MCF 10A (cell line): ENCODE measurements at regions of chr11 and their contacts with region 1.

Region 1: DNA sequence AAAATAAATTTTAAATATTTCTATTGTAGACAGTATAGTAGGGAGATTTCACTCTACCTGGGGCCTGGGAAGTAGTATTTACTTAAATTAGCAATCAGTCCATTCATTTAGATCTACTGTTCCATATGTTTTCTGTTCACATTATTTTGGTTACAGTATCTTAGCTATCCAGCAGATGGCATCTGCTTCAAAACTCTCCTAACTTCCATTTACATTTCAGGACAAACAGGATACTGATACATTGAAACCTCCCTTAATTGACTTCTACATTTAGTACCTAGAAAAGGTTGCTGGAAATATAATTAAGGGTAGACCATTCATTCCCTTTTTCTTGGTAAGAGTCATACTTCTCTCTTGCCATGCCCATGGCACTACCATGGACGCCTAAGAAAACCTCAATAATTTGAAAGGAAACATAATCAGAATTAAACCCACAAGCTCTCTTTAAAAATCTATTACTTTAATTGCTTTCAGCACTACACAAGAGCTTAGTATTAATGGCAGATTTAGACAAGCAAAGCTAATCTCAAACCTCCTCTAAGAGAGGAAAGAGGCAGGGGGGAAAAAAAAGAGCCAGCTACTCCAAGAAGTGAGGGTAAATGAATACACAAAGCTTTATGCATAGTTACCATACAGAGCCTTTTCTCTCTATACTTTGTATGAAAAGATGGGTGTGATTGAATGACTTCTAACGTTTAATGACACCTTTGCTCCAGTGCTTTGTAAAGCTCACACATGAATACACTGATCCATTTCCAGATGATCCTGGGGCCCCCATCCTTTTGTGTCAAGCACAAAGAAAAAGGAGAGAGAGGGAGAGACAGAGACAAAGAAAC is 131.2 kb upstream of the MTMR2 start:
- DNase-seq: peak; percentile 49
- H3K4me3 Mint-ChIP-seq: no peak overlapping the region
- H3K27ac Mint-ChIP-seq: peak overlapping the region; percentile 61
- H3K4me1 Mint-ChIP-seq: peaks cover 13% of the 10 kb centered on the region
- H3K27me3 Mint-ChIP-seq: no peaks in the 10 kb centered on the region
- CTCF ChIP-seq: peak; percentile 47

Region 2: DNA sequence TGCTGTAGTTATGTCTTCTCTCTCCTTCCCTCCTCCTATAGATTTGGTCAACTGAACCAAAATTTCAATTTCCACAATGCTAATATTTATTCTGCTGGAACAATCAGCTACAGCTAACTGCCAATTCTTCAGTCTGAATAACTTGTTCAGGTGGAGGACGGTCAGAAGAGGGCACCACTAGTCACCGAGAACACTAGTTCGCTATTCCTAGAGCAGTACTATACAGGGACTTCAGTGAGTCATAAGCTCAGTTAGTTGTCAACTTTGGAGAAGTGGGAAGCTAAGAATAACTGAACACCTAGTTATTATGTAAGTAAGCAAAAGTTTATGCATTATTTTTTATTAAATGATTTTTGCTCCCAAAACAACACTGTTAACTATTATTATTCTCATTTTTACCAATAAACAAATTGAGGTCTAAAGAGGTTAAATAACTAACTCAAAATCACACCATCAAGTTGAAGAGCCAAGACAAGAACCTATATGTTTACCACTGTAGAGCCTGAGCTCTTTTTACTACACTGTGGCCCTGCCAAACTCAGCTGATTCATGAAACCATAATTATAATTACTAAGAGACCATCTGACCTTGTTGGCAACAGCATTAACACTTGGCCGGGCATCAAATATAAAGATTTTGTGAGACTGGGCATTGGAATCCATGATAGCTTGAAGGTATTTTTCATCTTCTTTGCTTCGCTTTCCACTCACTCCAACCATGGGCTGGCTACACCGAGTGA is 205.8 kb before region 1 on chr11:
- CTCF ChIA-PET with region 1: no interaction called
- POLR2A ChIA-PET with region 1: no interaction called
- intact Hi-C with region 1: loop called (anchors 5 kb)
- DNase-seq: peak; percentile 76
- H3K4me3 Mint-ChIP-seq: no peak overlapping the region
- H3K27ac Mint-ChIP-seq: no peak overlapping the region
- H3K4me1 Mint-ChIP-seq: peaks cover 5% of the 10 kb centered on the region
- H3K27me3 Mint-ChIP-seq: no peaks in the 10 kb centered on the region
- CTCF ChIP-seq: peak; percentile 37

Region 3: DNA sequence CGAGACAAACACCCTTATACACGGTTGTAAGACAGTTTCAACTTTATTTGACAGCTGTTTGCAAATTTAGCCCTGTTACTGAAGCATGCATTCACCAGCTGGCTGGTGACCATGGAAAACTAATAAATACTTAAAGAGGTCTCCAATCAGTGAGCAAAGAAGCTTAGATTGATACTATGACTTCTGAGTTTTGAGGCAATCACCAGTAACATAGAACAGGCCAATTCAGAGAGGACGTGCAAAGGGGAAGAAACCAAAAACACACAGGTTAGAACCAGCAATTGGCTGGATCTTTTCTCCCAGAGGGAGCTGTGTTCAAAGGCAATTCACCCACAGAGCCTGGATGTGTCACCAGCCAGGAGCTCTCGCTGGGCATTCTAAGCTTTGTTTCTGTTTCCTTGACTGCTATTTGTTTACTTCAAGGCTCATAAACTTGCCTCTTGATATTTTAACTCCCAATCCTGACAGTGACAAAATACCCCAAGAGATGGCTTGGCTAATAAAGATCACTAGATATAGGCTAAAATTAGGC is 17.6 kb before region 1 on chr11:
- CTCF ChIA-PET with region 1: interaction called, 10 read pairs
- POLR2A ChIA-PET with region 1: no interaction called
- intact Hi-C with region 1: no loop called
- DNase-seq: peak; percentile 24
- H3K4me3 Mint-ChIP-seq: no peak overlapping the region
- H3K27ac Mint-ChIP-seq: peak overlapping the region; percentile 73
- H3K4me1 Mint-ChIP-seq: peaks cover 23% of the 10 kb centered on the region
- H3K27me3 Mint-ChIP-seq: no peaks in the 10 kb centered on the region
- CTCF ChIP-seq: no peak

Region 4: DNA sequence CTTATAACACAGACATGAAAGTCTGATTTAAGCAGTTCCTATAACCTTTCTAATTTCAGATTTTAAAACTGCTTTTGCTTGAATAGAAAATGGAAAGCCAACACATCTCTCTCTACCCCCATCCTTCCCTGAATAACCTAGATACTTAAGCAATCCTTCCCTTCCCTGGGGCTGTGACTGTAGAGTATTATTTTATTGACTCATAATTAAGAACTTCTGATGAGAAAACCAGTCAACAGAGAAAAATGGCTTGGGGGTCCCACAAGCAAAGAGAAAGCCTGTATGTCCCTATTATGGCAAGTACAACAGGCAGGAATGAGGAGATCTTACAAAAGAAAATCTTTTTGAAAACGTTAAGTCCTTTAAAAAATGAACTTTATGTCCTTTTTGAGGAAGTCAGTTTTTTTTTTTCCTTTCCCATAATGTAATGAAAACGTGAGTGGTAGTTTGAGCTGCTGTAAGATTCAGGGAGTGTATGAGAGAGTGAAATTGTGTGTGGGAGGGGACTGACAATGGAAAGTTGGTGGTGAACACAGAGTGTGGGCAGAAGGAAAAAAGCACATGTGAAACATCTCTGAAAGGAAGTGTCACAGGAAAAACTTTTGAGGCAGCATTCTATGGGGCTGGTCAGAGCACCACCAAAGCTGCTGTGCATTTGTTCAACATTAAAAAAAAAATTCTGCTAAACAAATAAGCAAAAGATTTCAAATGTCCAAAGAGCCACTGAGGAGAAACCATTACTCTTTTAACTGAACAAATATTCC is 133.3 kb after region 1 on chr11:
- CTCF ChIA-PET with region 1: interaction called, 10 read pairs
- POLR2A ChIA-PET with region 1: no interaction called
- intact Hi-C with region 1: no loop called
- DNase-seq: peak; percentile 87
- H3K4me3 Mint-ChIP-seq: peak overlapping the region; percentile 48
- H3K27ac Mint-ChIP-seq: peak overlapping the region; percentile 96
- H3K4me1 Mint-ChIP-seq: peaks cover 38% of the 10 kb centered on the region
- H3K27me3 Mint-ChIP-seq: no peaks in the 10 kb centered on the region
- CTCF ChIP-seq: no peak

Region 5: DNA sequence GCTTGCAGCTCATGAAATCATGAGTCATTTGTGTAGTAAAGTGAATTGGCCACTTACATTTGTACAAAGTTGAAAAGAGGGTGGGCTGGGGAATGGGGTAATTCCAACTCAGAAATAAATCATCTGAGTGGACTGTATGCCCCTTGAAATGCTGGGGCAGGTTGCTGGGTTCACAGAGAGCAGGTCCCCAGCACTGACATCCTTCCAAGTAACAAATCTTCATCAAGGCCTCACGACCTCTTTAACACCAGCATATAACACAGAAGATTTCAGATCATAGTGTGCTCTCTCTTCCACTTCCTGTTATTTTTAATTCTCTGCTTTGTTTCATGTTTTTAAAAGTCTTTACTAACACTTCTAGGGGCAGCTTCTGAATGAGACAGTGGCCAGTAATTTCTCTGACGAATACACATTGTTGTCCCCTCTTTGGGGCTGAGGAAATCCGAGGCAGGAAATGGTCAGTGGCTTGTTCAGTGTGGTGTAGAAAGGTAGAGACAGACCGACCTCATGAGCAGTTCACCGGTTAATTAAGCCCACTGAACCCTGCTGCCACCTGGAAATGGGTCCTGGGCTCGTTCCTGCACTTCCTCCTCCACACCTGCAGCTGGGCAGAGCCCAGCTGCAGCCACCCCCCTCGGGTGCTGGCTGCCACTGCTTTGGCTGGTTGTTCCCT is 160.2 kb after region 1 on chr11:
- CTCF ChIA-PET with region 1: no interaction called
- POLR2A ChIA-PET with region 1: no interaction called
- intact Hi-C with region 1: no loop called
- DNase-seq: peak; percentile 46
- H3K4me3 Mint-ChIP-seq: no peak overlapping the region
- H3K27ac Mint-ChIP-seq: peak overlapping the region; percentile 36
- H3K4me1 Mint-ChIP-seq: peaks cover 44% of the 10 kb centered on the region
- H3K27me3 Mint-ChIP-seq: no peaks in the 10 kb centered on the region
- CTCF ChIP-seq: no peak

Region 6: DNA sequence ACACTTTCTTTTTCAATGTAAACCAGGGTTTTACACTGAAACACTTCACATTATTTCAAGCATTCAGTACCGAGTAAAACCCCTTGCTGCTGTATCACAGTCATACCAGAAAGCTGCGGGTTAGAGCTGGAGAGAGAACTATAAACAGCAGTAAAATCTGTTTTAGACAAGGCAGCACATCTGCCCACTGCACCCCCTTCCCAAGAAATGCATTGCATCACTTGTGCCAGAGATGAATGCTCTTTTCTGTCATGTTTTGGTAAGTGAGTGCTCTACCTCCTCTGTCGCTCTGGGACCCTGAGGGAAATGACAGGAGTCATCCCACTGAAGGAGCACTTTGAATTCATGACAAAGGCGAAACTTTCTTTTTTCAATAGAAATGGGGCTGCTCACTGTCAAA is 180.7 kb after region 1 on chr11:
- CTCF ChIA-PET with region 1: interaction called, 13 read pairs
- POLR2A ChIA-PET with region 1: interaction called, 3 read pairs
- intact Hi-C with region 1: no loop called
- DNase-seq: no peak
- H3K4me3 Mint-ChIP-seq: no peak overlapping the region
- H3K27ac Mint-ChIP-seq: peak overlapping the region; percentile 63
- H3K4me1 Mint-ChIP-seq: peaks cover 7% of the 10 kb centered on the region
- H3K27me3 Mint-ChIP-seq: no peaks in the 10 kb centered on the region
- CTCF ChIP-seq: no peak

Region 7: DNA sequence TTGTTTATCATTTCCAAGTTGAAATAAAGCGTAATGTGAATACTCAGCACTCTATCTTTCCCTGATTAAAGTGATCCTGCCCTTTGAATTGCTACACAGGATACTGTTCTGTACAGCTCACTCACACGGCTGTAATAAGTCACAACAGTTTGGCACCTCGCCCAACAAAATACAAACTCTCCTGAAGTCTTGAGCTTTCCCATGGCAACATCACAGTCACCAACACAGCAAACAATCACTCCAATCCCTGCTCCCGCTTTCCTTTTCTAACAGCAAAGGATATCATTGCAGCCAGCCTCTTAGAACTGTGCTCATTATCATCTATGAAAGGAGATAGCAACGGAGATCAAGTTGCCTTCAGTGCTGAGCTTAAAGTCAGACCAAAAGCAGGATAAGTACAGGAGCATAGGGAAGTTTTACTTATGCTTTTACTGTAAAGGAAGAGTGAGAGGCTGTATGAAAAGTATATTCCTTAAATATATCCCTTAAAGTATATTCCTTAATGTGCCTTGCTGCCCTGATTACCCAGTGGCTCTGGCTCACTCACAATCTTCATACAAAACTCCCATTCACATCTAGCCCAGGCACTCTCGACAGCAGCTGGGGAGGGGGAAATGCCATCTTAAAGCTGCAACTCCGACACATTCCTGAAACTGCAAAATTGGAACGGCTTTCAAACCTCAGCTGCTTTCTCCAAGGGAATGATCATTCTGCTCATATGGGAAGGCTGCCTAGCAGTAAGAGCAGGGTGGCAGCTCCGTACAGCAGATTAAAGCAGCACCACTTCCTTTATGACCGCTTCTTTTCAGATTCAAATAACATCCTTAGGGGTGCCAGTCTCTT is 252.1 kb after region 1 on chr11:
- CTCF ChIA-PET with region 1: interaction called, 12 read pairs
- POLR2A ChIA-PET with region 1: interaction called, 4 read pairs
- intact Hi-C with region 1: no loop called
- DNase-seq: peak; percentile 100
- H3K4me3 Mint-ChIP-seq: peak overlapping the region; percentile 68
- H3K27ac Mint-ChIP-seq: peak overlapping the region; percentile 97
- H3K4me1 Mint-ChIP-seq: peaks cover 59% of the 10 kb centered on the region
- H3K27me3 Mint-ChIP-seq: no peaks in the 10 kb centered on the region
- CTCF ChIP-seq: no peak